Endothelial cell of umbilical vein (primary cell): ENCODE measurements at regions of chr4 and their contacts with region 1.

Region 1: DNA sequence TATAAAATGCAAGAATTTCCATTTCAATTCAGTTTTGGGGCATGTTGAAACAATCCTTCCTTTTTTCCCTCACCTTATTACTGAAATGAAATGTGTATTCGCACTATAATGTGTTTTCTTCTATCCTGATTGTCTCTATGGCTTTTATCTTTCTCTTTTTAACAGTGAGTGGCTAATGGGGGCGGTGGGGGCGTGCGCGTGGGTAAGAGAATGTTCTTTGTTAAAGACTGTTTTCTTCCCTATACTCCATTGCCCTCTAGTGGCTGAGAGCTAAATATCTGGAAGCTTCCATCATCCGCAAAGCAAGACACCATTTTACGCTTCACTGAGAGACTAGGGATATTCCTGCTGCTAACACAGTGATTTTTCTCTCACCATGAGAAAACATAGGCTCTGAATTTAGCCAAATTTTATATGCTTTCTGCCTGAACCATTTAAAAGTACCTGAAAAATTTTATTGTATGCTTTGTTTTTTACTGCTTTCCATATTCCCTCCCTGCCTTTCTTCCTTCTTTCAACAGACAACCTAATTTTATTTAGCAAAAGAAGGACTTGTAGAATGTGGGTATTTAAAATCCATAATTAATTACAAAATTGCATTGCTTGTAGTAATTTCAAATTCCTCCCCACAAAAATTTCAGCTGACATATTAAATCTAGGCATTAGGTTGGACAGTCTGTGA is 194.0 kb downstream of the GASK1B start:
- DNase-seq: peak; percentile 82
- H3K4me3 ChIP-seq: peak overlapping the region in 2 of 3 experiments; percentile 18 to 75
- H3K27ac ChIP-seq: peak overlapping the region; percentile 44
- H3K4me1 ChIP-seq: peaks cover 29% of the 10 kb centered on the region
- H3K27me3 ChIP-seq: no peaks in the 10 kb centered on the region
- CTCF ChIP-seq: peak; percentile 61 to 67
- POLR2A ChIP-seq: no peak

Region 2: GRCh38 chr4:157220371-157220881 is 758.4 kb before region 1 on chr4 and contains the start of gene GRIA2:
- CTCF ChIA-PET with region 1: interaction called, 41 read pairs
- POLR2A ChIA-PET with region 1: no interaction called
- dilution Hi-C with region 1: no loop called
- intact Hi-C with region 1: loop called (anchors 1 kb)
- DNase-seq: peak; percentile 69
- H3K4me3 ChIP-seq: peak within 1 kb of the TSS in 2 of 3 experiments; percentile 11 to 22
- H3K27ac ChIP-seq: no peak within 1 kb of the TSS
- H3K4me1 ChIP-seq: peaks cover 7% of the 10 kb centered on the region
- H3K27me3 ChIP-seq: peaks cover 28 to 45% of the 10 kb centered on the region in 2 experiments
- CTCF ChIP-seq: no peak
- POLR2A ChIP-seq: no peak
- total RNA-seq, gene GRIA2: not detected in 2 replicates

Region 3: DNA sequence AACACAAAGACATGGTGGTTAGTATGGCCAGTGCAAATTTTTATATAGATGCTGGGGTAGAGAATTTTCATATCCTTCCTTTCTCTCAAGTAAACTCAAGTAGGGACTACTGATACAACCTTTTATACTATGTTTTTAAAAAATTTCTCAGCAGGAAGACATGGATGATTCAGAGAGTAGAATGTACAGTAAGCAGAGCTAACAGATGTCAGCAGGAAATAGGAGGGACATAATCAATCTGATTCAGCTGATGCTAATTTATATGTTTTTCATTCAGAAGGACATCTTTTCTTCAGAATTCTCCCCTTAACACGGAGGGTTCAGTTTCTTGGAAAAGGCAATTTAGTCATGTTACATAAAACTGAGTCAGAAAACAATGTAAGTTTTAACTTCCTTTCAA is 662.9 kb before region 1 on chr4:
- CTCF ChIA-PET with region 1: no interaction called
- POLR2A ChIA-PET with region 1: no interaction called
- dilution Hi-C with region 1: no loop called
- intact Hi-C with region 1: loop called (anchors 10 kb)
- DNase-seq: peak; percentile 47
- H3K4me3 ChIP-seq: no peak overlapping the region
- H3K27ac ChIP-seq: no peak overlapping the region
- H3K4me1 ChIP-seq: no peaks in the 10 kb centered on the region
- H3K27me3 ChIP-seq: no peaks in the 10 kb centered on the region
- CTCF ChIP-seq: no peak
- POLR2A ChIP-seq: no peak

Region 4: DNA sequence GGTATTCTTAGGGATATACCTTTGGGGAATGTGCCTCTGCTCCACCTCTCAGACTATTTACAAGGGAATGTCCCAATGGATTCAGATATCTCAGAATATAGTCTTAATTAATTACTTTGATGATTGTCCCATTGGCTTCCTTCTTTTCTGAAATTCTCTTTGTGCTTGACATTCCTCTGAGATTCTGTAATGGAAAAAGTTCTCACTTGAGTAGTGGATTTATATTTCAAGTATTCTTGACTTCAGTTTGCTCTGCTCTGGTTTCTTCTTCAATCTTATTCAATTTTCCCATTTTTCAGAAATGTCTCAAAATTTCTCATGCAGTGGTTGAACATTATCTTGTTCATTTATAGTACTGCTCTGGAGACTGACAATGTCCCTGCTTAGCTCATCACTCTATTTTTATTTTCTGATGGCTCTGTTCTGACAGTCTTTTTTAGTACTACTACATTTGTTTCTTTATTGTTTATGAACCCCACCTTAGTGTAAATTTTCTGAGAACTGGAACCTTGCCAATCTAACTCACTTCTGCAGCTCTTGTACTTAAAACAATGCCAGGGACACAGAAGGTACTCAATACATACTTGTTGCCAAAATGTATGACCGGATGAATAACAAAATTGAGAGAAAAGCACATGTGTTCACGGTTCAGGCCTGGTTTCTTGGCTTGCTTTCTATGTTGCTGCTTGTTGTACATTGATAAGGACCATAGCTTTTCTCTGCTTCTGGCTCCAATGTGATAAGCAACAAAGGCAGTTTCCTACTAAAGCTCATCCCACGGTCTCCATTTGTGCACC is 277.7 kb before region 1 on chr4:
- CTCF ChIA-PET with region 1: interaction called, 3 read pairs
- POLR2A ChIA-PET with region 1: no interaction called
- dilution Hi-C with region 1: no loop called
- intact Hi-C with region 1: loop called (anchors 1 kb)
- DNase-seq: peak; percentile 98
- H3K4me3 ChIP-seq: peak overlapping the region in 1 of 3 experiments; percentile 10
- H3K27ac ChIP-seq: peak overlapping the region; percentile 79
- H3K4me1 ChIP-seq: peaks cover 25% of the 10 kb centered on the region
- H3K27me3 ChIP-seq: no peaks in the 10 kb centered on the region
- CTCF ChIP-seq: no peak
- POLR2A ChIP-seq: no peak

Region 5: GRCh38 chr4:157992038-157992705 is 13.4 kb after region 1 on chr4:
- CTCF ChIA-PET with region 1: no interaction called
- POLR2A ChIA-PET with region 1: no interaction called
- dilution Hi-C with region 1: no loop called
- intact Hi-C with region 1: no loop called
- DNase-seq: peak; percentile 92
- H3K4me3 ChIP-seq: peak overlapping the region; percentile 12 to 61 (median 21)
- H3K27ac ChIP-seq: peak overlapping the region; percentile 32
- H3K4me1 ChIP-seq: peaks cover 37% of the 10 kb centered on the region
- H3K27me3 ChIP-seq: no peaks in the 10 kb centered on the region
- CTCF ChIP-seq: peak; percentile 36 to 41
- POLR2A ChIP-seq: no peak

Region 6: GRCh38 chr4:158020176-158020575 is 41.4 kb after region 1 on chr4:
- CTCF ChIA-PET with region 1: no interaction called
- POLR2A ChIA-PET with region 1: no interaction called
- dilution Hi-C with region 1: no loop called
- intact Hi-C with region 1: no loop called
- DNase-seq: peak; percentile 96
- H3K4me3 ChIP-seq: peak overlapping the region in 1 of 3 experiments; percentile 30
- H3K27ac ChIP-seq: peak overlapping the region; percentile 95
- H3K4me1 ChIP-seq: peaks cover 59% of the 10 kb centered on the region
- H3K27me3 ChIP-seq: no peaks in the 10 kb centered on the region
- CTCF ChIP-seq: no peak
- POLR2A ChIP-seq: no peak